ENCODE measurements at regions of chr12 and their contacts with region 1.

Region 1: GRCh38 chr12:121499929-121500793 is 80.7 kb downstream of the KDM2B start:
- DNase-seq: peak; percentile 95
- H3K4me3 ChIP-seq: peak overlapping the region; percentile 35 to 49 (median 40)
- H3K27ac ChIP-seq: peak overlapping the region; percentile 71 to 82 (median 72)
- H3K4me1 ChIP-seq: peaks cover 9 to 16% (median 12%) of the 10 kb centered on the region in 4 donors
- H3K27me3 ChIP-seq: no peaks in the 10 kb centered on the region
- CTCF ChIP-seq: peak; percentile 97 to 98 (median 97)
- EP300 ChIP-seq: no peak
- POLR2A ChIP-seq: no peak

Region 2: GRCh38 chr12:121536899-121537813 is 37.0 kb after region 1 on chr12:
- intact Hi-C with region 1: loop called (anchors 2 kb)
- DNase-seq: peak; percentile 95
- H3K4me3 ChIP-seq: peak overlapping the region; percentile 65 to 90 (median 77)
- H3K27ac ChIP-seq: peak overlapping the region; percentile 85 to 97 (median 92)
- H3K4me1 ChIP-seq: peaks cover 45 to 57% (median 50%) of the 10 kb centered on the region in 4 donors
- H3K27me3 ChIP-seq: no peaks in the 10 kb centered on the region
- CTCF ChIP-seq: no peak
- EP300 ChIP-seq: no peak
- POLR2A ChIP-seq: peak; percentile 24

Region 3: GRCh38 chr12:121620328-121620891 is 120.2 kb after region 1 on chr12:
- intact Hi-C with region 1: no loop called
- DNase-seq: no peak
- H3K4me3 ChIP-seq: no peak overlapping the region
- H3K27ac ChIP-seq: peak overlapping the region in 3 of 4 donors; percentile 25 to 51 (median 45)
- H3K4me1 ChIP-seq: peaks cover 6 to 16% (median 12%) of the 10 kb centered on the region in 4 donors
- H3K27me3 ChIP-seq: no peaks in the 10 kb centered on the region
- CTCF ChIP-seq: no peak
- EP300 ChIP-seq: no peak
- POLR2A ChIP-seq: no peak

Region 4: DNA sequence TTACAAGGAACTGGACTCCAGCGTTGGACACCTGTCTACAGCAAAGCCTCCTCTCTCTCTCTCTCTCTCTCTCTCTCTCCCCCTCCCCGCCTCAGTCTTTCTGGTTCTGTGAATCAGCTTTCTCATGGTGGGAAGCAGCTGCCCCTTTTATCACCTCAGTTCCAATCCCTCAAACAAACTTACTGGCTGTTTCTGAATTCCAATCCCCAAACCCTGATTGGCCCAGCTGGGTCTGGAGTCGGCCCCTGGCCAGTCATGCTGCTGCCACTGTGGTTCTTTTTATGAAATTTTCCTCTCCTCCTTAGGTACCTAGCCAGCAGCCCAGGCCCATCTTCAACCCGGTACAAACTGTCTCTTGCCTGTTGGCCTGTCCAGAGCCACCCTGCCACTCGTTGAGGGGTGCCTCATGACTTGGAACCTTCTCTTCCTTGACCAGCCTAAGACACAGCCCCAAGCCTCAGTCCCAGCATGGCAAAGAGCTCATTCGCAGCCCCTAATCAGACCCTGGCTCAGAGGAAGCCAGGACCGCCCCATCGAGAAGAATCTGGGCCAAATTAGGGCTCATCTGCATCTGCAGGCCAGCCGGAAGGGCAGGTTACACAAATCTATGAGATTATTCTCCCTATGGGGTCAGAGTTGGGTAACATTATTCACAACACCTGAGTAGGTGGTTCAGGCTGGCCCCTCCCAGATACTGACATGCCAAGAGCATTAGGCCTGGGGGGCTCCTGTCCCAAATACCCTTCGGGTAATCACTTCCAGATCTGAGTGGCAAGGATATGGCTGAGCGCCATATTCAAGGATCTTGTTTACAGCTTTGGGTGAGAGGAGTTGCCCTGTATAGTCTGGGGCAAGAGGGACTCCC is 178.8 kb after region 1 on chr12:
- intact Hi-C with region 1: loop called (anchors 2 kb)
- DNase-seq: no peak
- H3K4me3 ChIP-seq: no peak overlapping the region
- H3K27ac ChIP-seq: no peak overlapping the region
- H3K4me1 ChIP-seq: no peaks in the 10 kb centered on the region
- H3K27me3 ChIP-seq: no peaks in the 10 kb centered on the region
- CTCF ChIP-seq: no peak
- EP300 ChIP-seq: no peak
- POLR2A ChIP-seq: no peak